ENCODE measurements at regions of chr21 and their contacts with region 1.

Region 1: GRCh38 chr21:36419996-36420395 is 34.8 kb downstream of the CHAF1B start:
- DNase-seq: peak; percentile 85 to 96
- H3K4me3 ChIP-seq: no peak overlapping the region
- H3K27ac ChIP-seq: no peak overlapping the region
- H3K4me1 ChIP-seq: peaks cover 0 to 13% (median 9%) of the 10 kb centered on the region in 4 donors
- H3K27me3 ChIP-seq: no peaks in the 10 kb centered on the region
- CTCF ChIP-seq: peak in 5 of 7 experiments; percentile 50 to 77 (median 69)
- EP300 ChIP-seq: no peak
- POLR2A ChIP-seq: no peak

Region 2: GRCh38 chr21:36591326-36591970 is 171.5 kb after region 1 on chr21:
- intact Hi-C with region 1: loop called (anchors 10 kb)
- DNase-seq: no peak
- H3K4me3 ChIP-seq: no peak overlapping the region
- H3K27ac ChIP-seq: no peak overlapping the region
- H3K4me1 ChIP-seq: no peaks in the 10 kb centered on the region
- H3K27me3 ChIP-seq: peaks cover 0 to 9% (median 3%) of the 10 kb centered on the region in 3 donors
- CTCF ChIP-seq: no peak
- EP300 ChIP-seq: no peak
- POLR2A ChIP-seq: no peak

Measured in stomach (tissue), 19 donors.